Caco-2 (cell line): ENCODE measurements at regions of chr3 and their contacts with region 1.

Region 1: DNA sequence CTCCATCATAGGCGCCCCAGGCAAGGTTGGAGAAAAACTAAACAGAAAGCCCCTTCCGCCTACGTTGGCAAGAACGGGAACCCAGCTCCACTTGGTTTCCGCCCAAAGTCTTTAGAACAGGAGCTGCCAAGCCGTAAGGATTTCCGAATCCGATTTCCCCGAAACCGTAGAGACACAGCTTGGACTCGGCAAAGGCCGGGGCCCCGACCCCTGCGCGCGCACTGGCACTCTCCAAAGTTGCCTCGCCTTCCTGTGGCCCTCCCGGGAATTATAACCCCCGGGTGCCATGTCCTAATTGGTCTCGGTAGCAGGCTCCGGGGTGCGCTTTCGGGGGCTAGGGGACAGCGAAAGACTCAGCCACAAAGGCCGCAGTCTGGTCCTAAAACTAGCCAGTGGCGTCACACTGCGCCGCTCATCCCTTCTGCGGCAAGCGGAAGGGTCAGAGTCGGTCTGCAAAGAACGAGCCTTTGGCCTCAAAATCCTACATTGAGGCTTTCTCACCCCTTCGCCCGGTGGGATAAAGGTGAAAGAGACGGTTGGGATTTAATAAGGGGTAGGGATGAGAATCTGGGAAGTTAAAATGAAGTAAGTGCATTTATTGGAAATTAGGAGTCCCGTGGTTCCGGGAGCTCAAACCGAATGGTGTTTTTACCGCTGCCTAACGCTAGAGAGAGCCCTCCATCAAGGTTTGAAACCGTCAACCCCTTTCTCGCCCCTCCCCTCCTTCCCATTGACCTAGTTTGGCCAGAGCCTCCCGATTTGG is 6.8 kb downstream of the BCL6 start:
- DNase-seq: peak; percentile 75 to 80
- H3K4me3 ChIP-seq: peak overlapping the region; percentile 0
- H3K4me3 Mint-ChIP-seq: peak overlapping the region; percentile 73
- H3K27ac Mint-ChIP-seq: no peak overlapping the region
- H3K4me1 ChIP-seq: peaks cover 13% of the 10 kb centered on the region; the same call in 1 of the 2 replicates
- H3K4me1 Mint-ChIP-seq: peaks cover 5% of the 10 kb centered on the region
- H3K27me3 ChIP-seq: no peaks in the 10 kb centered on the region
- H3K27me3 Mint-ChIP-seq: no peaks in the 10 kb centered on the region
- CTCF ChIP-seq: peak; percentile 55 to 63

Region 2: DNA sequence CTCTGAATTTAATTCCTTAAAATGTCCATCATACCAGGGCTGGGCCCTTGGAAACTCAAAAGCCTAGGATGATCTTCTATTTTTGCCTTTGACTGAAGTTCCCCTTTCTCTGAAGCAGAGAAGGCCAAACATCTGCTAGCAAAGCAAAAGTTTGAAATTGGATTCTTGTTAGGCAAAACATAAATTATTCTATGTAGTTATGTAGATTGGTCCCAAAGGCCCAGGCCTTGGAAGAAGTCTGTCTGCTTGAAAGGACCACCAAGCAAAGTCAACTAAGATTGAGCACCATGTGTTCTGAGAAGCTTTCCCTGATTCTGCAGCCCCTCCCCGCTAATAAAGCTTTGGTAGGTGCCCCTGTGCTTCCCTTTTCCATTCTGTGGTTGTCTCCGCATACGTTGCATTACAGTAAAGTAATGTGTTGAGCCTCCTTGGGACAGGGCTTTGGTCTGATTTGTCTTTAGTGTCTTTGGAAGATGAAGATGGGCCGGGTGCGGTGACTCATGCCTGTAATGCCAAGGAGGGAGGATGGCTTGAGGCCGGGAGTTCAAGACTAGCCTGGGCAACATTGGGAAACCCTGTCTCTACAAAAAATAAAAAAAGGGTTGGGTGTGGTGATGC is 655.6 kb before region 1 on chr3:
- CTCF ChIA-PET with region 1: no interaction called
- POLR2A ChIA-PET with region 1: no interaction called
- intact Hi-C with region 1: no loop called
- DNase-seq: no peak
- H3K4me3 ChIP-seq: no peak overlapping the region
- H3K4me3 Mint-ChIP-seq: no peak overlapping the region
- H3K27ac Mint-ChIP-seq: no peak overlapping the region
- H3K4me1 ChIP-seq: no peaks in the 10 kb centered on the region
- H3K4me1 Mint-ChIP-seq: no peaks in the 10 kb centered on the region
- H3K27me3 ChIP-seq: no peaks in the 10 kb centered on the region
- H3K27me3 Mint-ChIP-seq: no peaks in the 10 kb centered on the region
- CTCF ChIP-seq: no peak

Region 3: GRCh38 chr3:187648177-187648576 is 90.3 kb before region 1 on chr3:
- CTCF ChIA-PET with region 1: no interaction called
- POLR2A ChIA-PET with region 1: no interaction called
- intact Hi-C with region 1: no loop called
- DNase-seq: no peak
- H3K4me3 ChIP-seq: no peak overlapping the region
- H3K4me3 Mint-ChIP-seq: no peak overlapping the region
- H3K27ac Mint-ChIP-seq: no peak overlapping the region
- H3K4me1 ChIP-seq: no peaks in the 10 kb centered on the region
- H3K4me1 Mint-ChIP-seq: peaks cover 5% of the 10 kb centered on the region
- H3K27me3 ChIP-seq: peaks cover 2% of the 10 kb centered on the region; the same call in 1 of the 2 replicates
- H3K27me3 Mint-ChIP-seq: peaks cover 16% of the 10 kb centered on the region
- CTCF ChIP-seq: no peak

Region 4: GRCh38 chr3:188154014-188154808 is 415.7 kb after region 1 on chr3 and contains the start of gene LPP:
- CTCF ChIA-PET with region 1: interaction called, 8 read pairs
- POLR2A ChIA-PET with region 1: interaction called, 5 read pairs
- intact Hi-C with region 1: loop called (anchors 2 kb)
- DNase-seq: peak; percentile 79 to 86
- H3K4me3 ChIP-seq: peak within 1 kb of the TSS; percentile 68
- H3K4me3 Mint-ChIP-seq: peak within 1 kb of the TSS; percentile 84
- H3K27ac Mint-ChIP-seq: peak within 1 kb of the TSS; percentile 89
- H3K4me1 ChIP-seq: peaks cover 66% of the 10 kb centered on the region
- H3K4me1 Mint-ChIP-seq: peaks cover 48% of the 10 kb centered on the region
- H3K27me3 ChIP-seq: no peaks in the 10 kb centered on the region
- H3K27me3 Mint-ChIP-seq: no peaks in the 10 kb centered on the region
- CTCF ChIP-seq: peak in 1 of 2 experiments; percentile 27
- total RNA-seq, gene LPP: 120 and 147 TPM in 2 replicates

Region 5: DNA sequence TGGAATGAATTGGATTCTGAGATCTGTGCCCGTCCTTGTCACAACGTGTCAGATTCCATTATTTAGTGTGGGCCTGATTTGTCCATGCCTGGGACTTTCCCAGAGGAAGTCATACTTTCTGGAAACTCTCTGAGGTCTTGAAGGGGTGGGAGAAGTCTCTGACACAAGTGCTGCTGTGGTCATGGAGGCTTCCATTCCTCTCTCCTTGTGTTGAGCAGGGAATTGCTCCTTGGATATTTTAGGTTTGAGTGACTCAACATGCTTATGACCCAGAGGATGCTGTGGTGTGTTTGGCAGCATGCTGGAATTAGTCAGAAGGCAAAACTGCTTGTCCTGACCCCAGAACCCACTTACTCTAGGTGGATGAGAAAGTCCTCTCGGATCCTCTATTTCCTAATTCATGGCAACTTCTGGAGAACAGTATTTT is 547.6 kb after region 1 on chr3:
- CTCF ChIA-PET with region 1: no interaction called
- POLR2A ChIA-PET with region 1: interaction called, 5 read pairs
- intact Hi-C with region 1: loop called (anchors 5 kb)
- DNase-seq: no peak
- H3K4me3 ChIP-seq: no peak overlapping the region
- H3K4me3 Mint-ChIP-seq: no peak overlapping the region
- H3K27ac Mint-ChIP-seq: no peak overlapping the region
- H3K4me1 ChIP-seq: peaks cover 38% of the 10 kb centered on the region
- H3K4me1 Mint-ChIP-seq: peaks cover 45% of the 10 kb centered on the region
- H3K27me3 ChIP-seq: no peaks in the 10 kb centered on the region
- H3K27me3 Mint-ChIP-seq: no peaks in the 10 kb centered on the region
- CTCF ChIP-seq: no peak

Region 6: DNA sequence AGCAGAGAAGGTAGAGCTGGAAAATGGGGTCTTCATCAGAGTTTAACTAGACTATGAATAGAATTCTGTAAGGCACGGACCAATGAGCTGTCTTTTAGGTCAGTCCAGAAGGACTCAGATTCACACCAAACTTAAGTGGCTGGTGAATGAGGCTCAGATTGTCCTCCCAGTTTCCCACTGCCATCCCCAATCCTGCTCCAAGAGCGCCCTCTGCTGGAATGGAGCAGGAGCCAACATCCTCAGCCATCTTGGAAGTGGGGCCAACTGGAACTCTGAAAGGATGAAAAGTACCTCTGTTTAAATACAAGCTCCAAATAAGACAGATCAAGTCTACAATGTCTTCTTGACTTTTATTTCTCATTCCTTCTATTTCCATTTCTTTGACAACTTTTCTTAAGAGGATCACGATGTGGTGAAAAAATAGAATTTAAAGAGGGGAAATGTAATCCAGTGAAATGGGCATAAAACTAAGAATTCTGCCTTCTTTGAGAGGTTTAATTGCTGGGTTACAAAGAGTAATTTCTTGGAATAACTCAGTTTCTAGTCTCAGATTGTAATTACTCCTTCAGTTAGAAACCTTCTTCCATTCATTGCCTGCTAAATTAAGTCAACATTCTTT is 1216.2 kb after region 1 on chr3:
- CTCF ChIA-PET with region 1: interaction called, 18 read pairs
- POLR2A ChIA-PET with region 1: no interaction called
- intact Hi-C with region 1: loop called (anchors 1 kb)
- DNase-seq: peak; percentile 77 to 88
- H3K4me3 ChIP-seq: no peak overlapping the region
- H3K4me3 Mint-ChIP-seq: no peak overlapping the region
- H3K27ac Mint-ChIP-seq: no peak overlapping the region
- H3K4me1 ChIP-seq: peaks cover 20% of the 10 kb centered on the region
- H3K4me1 Mint-ChIP-seq: peaks cover 12% of the 10 kb centered on the region
- H3K27me3 ChIP-seq: no peaks in the 10 kb centered on the region
- H3K27me3 Mint-ChIP-seq: no peaks in the 10 kb centered on the region
- CTCF ChIP-seq: peak; percentile 91

Region 7: DNA sequence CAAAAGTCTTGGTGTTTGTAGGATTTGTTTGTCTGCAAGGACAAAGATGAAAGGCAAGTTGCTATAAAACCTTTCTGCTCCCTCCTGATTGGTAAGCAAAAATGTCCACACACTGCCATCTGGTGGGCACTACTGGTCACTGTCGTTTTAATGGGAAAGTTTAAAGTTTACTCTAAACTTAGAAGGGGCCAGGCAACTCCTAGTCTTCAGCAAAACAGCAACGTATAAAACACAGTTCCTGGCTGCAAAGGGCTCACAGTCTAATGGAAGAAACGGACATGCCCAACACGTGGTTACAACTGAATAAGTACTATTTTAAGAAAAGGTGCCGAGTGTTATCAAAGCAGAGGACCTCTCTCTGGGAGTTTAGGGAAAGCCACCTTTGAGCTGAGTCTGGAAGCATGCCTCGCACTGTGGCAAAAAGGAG is 1409.6 kb after region 1 on chr3:
- CTCF ChIA-PET with region 1: no interaction called
- POLR2A ChIA-PET with region 1: no interaction called
- intact Hi-C with region 1: loop called (anchors 5 kb)
- DNase-seq: peak; percentile 57 to 66
- H3K4me3 ChIP-seq: no peak overlapping the region
- H3K4me3 Mint-ChIP-seq: no peak overlapping the region
- H3K27ac Mint-ChIP-seq: no peak overlapping the region
- H3K4me1 ChIP-seq: no peaks in the 10 kb centered on the region
- H3K4me1 Mint-ChIP-seq: peaks cover 13% of the 10 kb centered on the region
- H3K27me3 ChIP-seq: no peaks in the 10 kb centered on the region
- H3K27me3 Mint-ChIP-seq: no peaks in the 10 kb centered on the region
- CTCF ChIP-seq: peak; percentile 66 to 74